ENCODE measurements at regions of chr19 and their contacts with region 1.

Region 1: DNA sequence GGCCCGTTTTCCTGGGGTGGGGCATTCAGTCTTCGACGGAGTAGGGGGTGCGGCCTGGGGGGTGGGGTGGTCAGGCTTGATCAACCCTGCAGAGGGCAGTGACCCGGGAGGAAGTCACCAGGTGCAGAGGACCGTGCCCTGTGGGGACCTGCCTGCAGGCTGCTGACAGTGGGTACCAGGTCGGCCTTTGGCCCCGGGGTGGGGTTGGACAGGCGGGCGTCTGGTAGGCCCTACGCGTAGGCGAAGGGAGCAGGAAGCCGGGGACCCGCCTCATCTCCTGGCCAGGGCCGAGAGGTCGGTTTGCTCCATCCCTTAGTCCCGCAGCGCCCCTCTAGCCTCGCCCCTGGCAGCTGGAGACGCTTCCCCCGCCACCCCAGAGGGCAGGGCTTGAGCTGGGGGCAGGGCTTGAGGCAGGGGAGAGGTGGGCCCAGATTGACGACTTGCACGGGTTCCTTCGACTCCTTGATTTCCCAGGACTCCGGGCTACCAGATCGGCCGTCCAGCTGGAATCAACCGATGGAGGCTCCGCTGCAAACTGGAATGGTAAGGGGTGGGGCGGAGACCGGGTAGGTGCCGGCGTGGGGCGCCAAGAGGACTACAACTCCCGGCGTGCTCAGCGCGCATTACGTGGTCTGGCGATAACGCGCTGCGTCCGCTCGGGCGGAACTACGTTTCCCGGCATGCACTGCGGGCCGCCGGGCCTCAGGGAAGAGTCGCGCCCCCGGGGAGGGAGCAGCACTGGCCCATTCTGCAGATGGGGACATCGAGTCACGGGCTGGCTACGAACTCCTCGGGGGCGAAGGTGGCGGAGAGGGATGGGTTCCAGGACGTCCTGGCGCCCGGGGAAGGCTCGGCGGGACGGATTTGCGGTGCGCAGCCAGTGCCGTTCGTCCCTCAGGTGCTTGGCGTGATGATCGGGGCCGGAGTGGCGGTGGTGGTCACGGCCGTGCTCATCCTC is at the start of gene PNPLA6:
- DNase-seq: peak; percentile 81
- ATAC-seq: peak; percentile 78
- H3K4me3 ChIP-seq: peak within 1 kb of the TSS; percentile 95 to 96
- H3K27ac ChIP-seq: peak within 1 kb of the TSS; percentile 81
- H3K4me1 ChIP-seq: peaks cover 4 to 30% of the 10 kb centered on the region in 2 experiments; a peak in 2 of 4 replicates
- H3K27me3 ChIP-seq: no peaks in the 10 kb centered on the region
- CTCF ChIP-seq: no peak
- POLR2A ChIP-seq: no peak
- RAD21 ChIP-seq: no peak
- total RNA-seq, gene PNPLA6: 159 TPM

Region 2: DNA sequence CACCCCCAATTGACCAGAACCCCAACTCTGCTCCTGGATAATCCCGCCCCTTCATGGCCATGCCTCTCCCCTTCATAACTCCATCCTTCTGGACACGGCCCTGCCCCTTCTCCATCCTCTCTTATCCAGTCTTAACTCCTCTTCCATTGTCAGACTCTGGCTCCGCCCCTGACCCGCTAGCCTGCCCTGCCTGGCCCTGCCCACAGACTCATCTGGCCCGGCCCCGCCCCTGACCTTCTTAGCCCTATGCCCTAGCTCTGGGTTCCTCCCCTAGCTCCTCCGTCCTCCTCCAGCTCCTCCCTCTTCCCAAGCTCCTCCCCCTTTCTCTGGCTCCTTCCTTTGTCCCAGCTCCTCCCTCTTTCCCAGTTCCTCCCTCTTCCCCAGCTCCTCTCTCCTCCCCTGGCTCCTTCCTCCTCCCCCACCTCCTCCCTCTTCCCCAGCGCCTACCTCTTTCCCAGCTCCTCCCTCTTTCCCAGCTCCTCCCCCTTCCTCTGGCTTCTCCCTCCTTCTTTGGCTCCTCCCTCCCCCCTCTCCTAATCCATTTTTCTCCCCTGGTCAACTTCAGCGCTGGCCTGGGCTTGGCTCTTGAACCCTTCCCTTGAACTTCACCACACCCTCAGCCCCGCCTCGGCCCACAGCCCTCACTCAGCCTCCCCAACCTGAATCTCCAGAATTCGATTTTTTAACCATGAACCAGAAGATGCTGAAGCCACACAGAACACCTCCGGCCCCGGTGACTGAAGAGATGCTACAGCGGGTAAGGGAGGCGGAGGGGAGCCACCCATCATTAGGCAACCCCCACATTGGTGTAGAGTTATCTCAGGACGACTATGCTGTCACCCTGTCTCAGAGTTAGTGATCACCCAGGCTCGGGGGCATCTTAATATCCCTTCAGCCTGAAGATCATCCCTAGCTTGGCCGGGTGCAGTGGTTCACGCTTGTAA is 28.7 kb before region 1 on chr19:
- CTCF ChIA-PET with region 1: no interaction called
- POLR2A ChIA-PET with region 1: no interaction called
- RAD21 ChIA-PET with region 1: no interaction called
- intact Hi-C with region 1: loop called (anchors 2 kb)
- DNase-seq: peak; percentile 99
- ATAC-seq: peak; percentile 89
- H3K4me3 ChIP-seq: peak overlapping the region; percentile 25 to 63
- H3K27ac ChIP-seq: peak overlapping the region; percentile 46
- H3K4me1 ChIP-seq: peaks cover 21 to 36% of the 10 kb centered on the region in 2 experiments
- H3K27me3 ChIP-seq: no peaks in the 10 kb centered on the region
- CTCF ChIP-seq: no peak
- POLR2A ChIP-seq: no peak
- RAD21 ChIP-seq: no peak

Region 3: GRCh38 chr19:7522072-7522922 is 13.0 kb before region 1 on chr19 and contains the start of gene MCOLN1:
- CTCF ChIA-PET with region 1: no interaction called
- POLR2A ChIA-PET with region 1: interaction called, 4 read pairs
- RAD21 ChIA-PET with region 1: no interaction called
- intact Hi-C with region 1: loop called (anchors 1 kb)
- DNase-seq: peak; percentile 90
- ATAC-seq: peak; percentile 89
- H3K4me3 ChIP-seq: peak within 1 kb of the TSS; percentile 77 to 89
- H3K27ac ChIP-seq: peak within 1 kb of the TSS; percentile 49
- H3K4me1 ChIP-seq: peaks cover 11 to 17% of the 10 kb centered on the region in 2 experiments; a peak in 3 of 4 replicates
- H3K27me3 ChIP-seq: no peaks in the 10 kb centered on the region
- CTCF ChIP-seq: no peak
- POLR2A ChIP-seq: no peak
- RAD21 ChIP-seq: no peak; the same call in 1 of the 2 replicates
- total RNA-seq, gene MCOLN1: 19.1 TPM

Region 4: GRCh38 chr19:7562646-7563393 is 27.5 kb after region 1 on chr19:
- CTCF ChIA-PET with region 1: interaction called, 10 read pairs
- POLR2A ChIA-PET with region 1: no interaction called
- RAD21 ChIA-PET with region 1: no interaction called
- intact Hi-C with region 1: no loop called
- DNase-seq: no peak
- ATAC-seq: no peak
- H3K4me3 ChIP-seq: no peak overlapping the region
- H3K27ac ChIP-seq: no peak overlapping the region
- H3K4me1 ChIP-seq: no peaks in the 10 kb centered on the region
- H3K27me3 ChIP-seq: no peaks in the 10 kb centered on the region
- CTCF ChIP-seq: no peak
- POLR2A ChIP-seq: no peak
- RAD21 ChIP-seq: no peak

Measured in HCT116 (cell line).